ENCODE measurements at regions of chr16 and their contacts with region 1.

Region 1: GRCh38 chr16:2838928-2839327 is 8.8 kb downstream of the ZG16B start:
- DNase-seq: peak; percentile 70
- H3K4me3 ChIP-seq: no peak overlapping the region
- H3K27ac ChIP-seq: no peak overlapping the region
- H3K4me1 ChIP-seq: peaks cover 23% of the 10 kb centered on the region
- H3K27me3 ChIP-seq: no peaks in the 10 kb centered on the region
- CTCF ChIP-seq: peak; percentile 95 to 98
- POLR2A ChIP-seq: no peak

Region 2: GRCh38 chr16:2500918-2501750 is 337.8 kb before region 1 on chr16:
- CTCF ChIA-PET with region 1: no interaction called
- POLR2A ChIA-PET with region 1: no interaction called
- dilution Hi-C with region 1: no loop called
- intact Hi-C with region 1: no loop called
- DNase-seq: peak; percentile 84
- H3K4me3 ChIP-seq: peak overlapping the region in 1 of 3 experiments; percentile 20
- H3K27ac ChIP-seq: no peak overlapping the region
- H3K4me1 ChIP-seq: no peaks in the 10 kb centered on the region
- H3K27me3 ChIP-seq: no peaks in the 10 kb centered on the region
- CTCF ChIP-seq: peak; percentile 96 to 99
- POLR2A ChIP-seq: no peak

Region 3: DNA sequence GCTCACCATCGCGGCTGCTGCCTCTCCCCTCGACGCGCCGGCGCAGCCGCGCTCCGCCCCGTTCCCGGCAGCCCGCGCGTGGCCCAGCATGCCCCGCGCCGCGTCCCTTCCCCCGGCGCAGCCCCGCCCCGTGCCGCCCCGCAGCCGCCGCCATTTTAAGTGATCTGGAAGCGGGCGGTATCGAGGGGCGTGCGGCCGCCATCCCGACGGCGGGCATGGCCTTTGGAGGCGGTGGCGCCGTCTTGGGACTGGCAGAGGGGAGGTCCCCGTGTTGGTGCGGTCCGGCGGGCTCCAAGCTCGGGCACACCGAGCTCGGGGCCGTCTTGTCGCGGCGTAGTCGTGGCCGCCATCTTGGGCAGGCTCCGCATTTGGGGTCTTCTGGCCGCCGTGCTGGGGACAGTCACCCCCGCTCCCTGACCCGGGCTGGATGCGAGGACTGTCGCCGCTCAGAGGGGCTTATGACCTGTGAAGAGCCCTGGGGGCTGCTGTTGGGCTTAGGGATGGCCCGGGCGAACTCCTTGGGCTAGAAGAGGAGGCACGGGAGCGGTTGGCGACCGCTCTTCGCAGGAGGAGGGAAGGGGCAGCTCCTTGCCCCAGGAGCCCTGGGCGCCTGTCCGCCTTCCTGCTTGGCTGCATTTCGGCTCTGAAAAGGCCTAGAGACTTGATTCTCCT is 61.6 kb before region 1 on chr16 and contains the start of gene ELOB:
- CTCF ChIA-PET with region 1: interaction called, 8 read pairs
- POLR2A ChIA-PET with region 1: no interaction called
- dilution Hi-C with region 1: no loop called
- intact Hi-C with region 1: loop called (anchors 10 kb)
- DNase-seq: peak; percentile 85
- H3K4me3 ChIP-seq: peak within 1 kb of the TSS; percentile 41 to 96 (median 65)
- H3K27ac ChIP-seq: peak within 1 kb of the TSS; percentile 80
- H3K4me1 ChIP-seq: peaks cover 8% of the 10 kb centered on the region
- H3K27me3 ChIP-seq: no peaks in the 10 kb centered on the region
- CTCF ChIP-seq: no peak
- POLR2A ChIP-seq: peak; percentile 82
- total RNA-seq, gene ELOB: 158 and 251 TPM in 2 replicates

Region 4: DNA sequence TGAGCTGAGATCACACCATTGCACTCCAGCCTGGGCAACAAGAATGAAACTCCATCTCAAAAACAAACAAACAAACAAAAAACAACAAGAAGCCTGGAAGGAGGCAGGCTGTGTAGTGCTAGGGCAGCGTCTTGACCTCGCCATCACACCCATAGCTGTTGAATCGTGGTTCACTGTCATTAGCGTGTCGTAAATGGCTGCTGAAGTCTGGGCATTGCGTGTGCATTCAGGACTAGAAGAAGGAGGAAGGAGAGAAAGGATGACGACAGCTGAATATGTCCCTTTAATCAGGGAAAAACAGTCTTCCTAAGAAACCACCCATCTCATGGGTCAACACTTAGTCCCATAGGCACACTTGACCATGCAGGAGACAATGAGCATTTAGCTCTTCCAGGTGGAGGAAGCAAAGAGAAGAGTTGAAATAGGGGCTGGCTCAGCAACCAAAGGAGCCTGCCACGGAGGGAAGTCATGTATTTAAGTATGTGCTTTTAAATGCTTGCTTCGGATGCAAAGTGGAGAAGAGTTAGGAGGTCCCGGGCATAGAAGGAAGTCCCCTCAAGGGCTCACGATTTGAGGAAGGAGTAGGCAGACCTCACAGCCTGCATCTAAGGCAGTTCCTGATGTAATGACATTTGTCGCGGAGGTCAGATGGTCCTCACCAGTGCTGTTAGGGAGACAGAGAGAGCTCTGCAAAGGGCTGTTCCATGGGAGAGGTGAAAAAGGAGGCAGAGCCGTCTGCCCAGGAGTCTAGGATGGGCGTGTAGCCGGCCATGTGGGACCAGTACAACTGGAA is 10.2 kb after region 1 on chr16:
- CTCF ChIA-PET with region 1: interaction called, 16 read pairs
- POLR2A ChIA-PET with region 1: no interaction called
- dilution Hi-C with region 1: no loop called
- intact Hi-C with region 1: no loop called
- DNase-seq: no peak
- H3K4me3 ChIP-seq: no peak overlapping the region
- H3K27ac ChIP-seq: no peak overlapping the region
- H3K4me1 ChIP-seq: no peaks in the 10 kb centered on the region
- H3K27me3 ChIP-seq: peaks cover 0 to 2% of the 10 kb centered on the region in 2 experiments
- CTCF ChIP-seq: no peak
- POLR2A ChIP-seq: no peak

Region 5: DNA sequence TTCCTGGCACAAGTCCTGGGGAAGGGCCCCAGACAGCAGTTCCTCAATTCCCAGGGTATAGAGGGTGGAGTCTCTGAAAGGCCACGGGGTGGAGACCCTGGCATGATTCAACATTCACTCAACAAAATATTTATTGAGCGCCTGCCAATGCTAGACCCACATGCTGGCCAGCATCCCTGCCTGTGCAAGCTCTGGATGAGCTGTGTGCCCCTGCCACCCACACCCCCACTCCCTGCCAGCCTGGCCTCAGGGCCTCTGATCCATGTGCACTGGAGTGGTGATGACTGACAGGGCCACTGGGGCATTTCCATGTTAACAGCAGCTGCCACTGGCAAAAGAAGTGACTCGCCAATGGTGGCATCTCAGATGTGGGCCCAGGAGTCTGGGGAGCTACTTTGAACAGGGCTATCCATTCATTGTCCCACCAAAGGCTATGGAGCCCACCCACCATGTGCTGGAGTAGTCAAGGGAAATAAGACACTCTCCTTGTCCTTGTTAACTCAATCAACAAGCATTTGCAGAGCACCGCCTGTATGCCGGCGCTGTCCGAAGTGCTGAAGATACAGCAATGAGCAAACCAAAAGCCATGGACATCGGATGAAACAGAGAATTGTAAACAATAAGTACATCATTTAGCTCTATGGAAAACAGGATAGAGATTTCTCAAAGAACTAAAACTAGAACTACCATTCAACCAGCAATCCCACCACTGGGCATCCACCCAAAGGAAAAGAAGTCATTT is 22.1 kb after region 1 on chr16:
- CTCF ChIA-PET with region 1: interaction called, 372 read pairs
- POLR2A ChIA-PET with region 1: no interaction called
- dilution Hi-C with region 1: no loop called
- intact Hi-C with region 1: no loop called
- DNase-seq: no peak
- H3K4me3 ChIP-seq: no peak overlapping the region
- H3K27ac ChIP-seq: no peak overlapping the region
- H3K4me1 ChIP-seq: no peaks in the 10 kb centered on the region
- H3K27me3 ChIP-seq: peaks cover 2 to 7% of the 10 kb centered on the region in 2 experiments
- CTCF ChIP-seq: no peak
- POLR2A ChIP-seq: no peak

Region 6: GRCh38 chr16:2883027-2883851 is 44.3 kb after region 1 on chr16 and contains the start of gene FLYWCH2:
- CTCF ChIA-PET with region 1: interaction called, 11 read pairs
- POLR2A ChIA-PET with region 1: no interaction called
- dilution Hi-C with region 1: no loop called
- intact Hi-C with region 1: no loop called
- DNase-seq: peak; percentile 99
- H3K4me3 ChIP-seq: peak within 1 kb of the TSS; percentile 42 to 91 (median 63)
- H3K27ac ChIP-seq: peak within 1 kb of the TSS; percentile 49
- H3K4me1 ChIP-seq: peaks cover 7% of the 10 kb centered on the region
- H3K27me3 ChIP-seq: no peaks in the 10 kb centered on the region
- CTCF ChIP-seq: no peak
- POLR2A ChIP-seq: peak; percentile 83
- total RNA-seq, gene FLYWCH2: 18.3 and 24.1 TPM in 2 replicates

Region 7: DNA sequence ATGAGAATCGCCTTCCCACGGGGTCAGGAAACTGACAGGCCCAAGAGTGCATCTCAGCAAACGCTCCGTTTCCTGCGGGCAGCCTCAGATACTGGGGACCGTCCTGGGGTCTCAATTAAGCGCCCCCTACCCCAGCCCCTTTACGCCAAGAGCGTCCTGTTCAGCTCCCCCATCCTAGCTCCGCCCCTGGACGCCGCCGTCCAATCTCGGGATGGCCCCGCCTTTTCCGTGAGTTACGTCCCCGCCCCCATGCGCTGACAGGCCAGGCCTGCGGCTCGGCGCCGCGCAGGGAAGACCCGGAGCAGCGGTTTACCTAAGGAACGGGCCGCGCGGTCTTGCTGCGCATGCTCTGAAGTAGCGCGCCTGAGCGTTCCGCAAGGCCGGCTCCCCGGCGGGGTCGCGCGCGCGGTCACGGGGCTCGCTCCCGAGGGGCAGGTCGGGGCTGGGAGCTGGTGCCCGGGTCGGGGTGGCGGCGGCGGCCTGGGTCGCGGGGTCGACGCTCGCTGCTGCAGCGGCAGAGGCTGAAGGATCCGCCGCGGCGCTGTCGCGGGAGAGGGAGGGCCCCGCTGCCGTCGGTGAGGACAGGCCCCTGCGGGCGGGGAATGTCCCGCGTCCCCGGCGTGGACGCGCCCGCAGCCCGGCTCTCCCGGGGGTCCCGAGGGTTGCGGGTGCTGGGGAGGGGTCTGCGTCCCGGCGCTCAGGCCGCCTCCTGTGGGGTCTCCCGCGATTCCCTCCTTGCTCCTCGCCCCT is 72.8 kb after region 1 on chr16 and contains the start of gene FLYWCH1:
- CTCF ChIA-PET with region 1: interaction called, 50 read pairs
- POLR2A ChIA-PET with region 1: interaction called, 3 read pairs
- dilution Hi-C with region 1: no loop called
- intact Hi-C with region 1: loop called (anchors 1 kb)
- DNase-seq: peak; percentile 98
- H3K4me3 ChIP-seq: peak within 1 kb of the TSS; percentile 84 to 96 (median 89)
- H3K27ac ChIP-seq: peak within 1 kb of the TSS; percentile 70
- H3K4me1 ChIP-seq: peaks cover 23% of the 10 kb centered on the region
- H3K27me3 ChIP-seq: no peaks in the 10 kb centered on the region
- CTCF ChIP-seq: no peak
- POLR2A ChIP-seq: no peak
- total RNA-seq, gene FLYWCH1: 51.2 and 51.7 TPM in 2 replicates

Region 8: DNA sequence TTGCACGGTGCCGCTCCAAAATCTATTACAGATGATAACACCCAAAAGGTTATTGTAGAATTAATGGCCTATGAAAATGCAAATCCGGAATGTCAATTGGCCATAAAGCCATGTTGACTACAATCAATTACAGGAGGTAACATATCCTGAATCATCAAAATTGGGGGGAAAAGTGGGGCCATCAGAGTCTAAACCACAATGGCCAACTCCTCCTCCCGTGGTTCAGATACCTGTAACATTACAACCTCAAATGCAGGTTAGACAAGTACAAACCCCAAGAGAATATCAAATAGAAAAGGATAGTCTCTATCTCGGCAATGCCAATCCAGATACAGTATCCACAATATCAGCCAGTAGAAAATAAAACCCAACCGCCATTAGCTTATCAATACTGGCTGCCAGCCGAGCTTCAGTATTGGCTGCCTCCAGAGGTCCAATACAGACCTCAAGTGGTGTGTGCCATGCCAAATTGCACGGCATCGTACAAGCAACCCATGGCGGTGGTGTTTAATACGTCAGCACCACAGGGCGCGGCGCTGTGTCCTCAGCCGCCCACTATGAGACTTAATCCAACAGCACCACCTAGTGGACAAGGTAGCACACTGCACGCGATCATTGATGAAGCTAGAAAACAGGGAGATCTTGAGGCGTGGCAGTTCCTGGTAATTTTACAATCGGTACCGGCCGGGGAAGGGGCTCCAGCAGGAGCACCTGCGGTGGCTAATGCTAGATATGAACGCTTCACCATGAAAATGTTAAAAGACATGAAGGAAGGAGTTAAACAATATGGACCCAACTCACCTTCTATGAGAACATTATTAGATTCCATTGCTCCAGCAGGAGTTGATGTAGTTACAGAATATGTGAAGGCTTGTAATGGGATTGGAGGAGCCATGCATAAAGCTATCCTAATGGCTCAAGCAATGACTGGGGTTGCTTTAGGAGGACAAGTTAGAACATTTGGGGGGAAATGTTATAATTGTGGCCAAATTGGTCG is 88.0 kb after region 1 on chr16:
- CTCF ChIA-PET with region 1: interaction called, 50 read pairs
- POLR2A ChIA-PET with region 1: no interaction called
- dilution Hi-C with region 1: no loop called
- intact Hi-C with region 1: no loop called
- DNase-seq: peak; percentile 81
- H3K4me3 ChIP-seq: peak overlapping the region in 1 of 3 experiments; percentile 7
- H3K27ac ChIP-seq: no peak overlapping the region
- H3K4me1 ChIP-seq: peaks cover 2% of the 10 kb centered on the region
- H3K27me3 ChIP-seq: no peaks in the 10 kb centered on the region
- CTCF ChIP-seq: peak; percentile 83 to 94
- POLR2A ChIP-seq: no peak

Measured in endothelial cell of umbilical vein (primary cell).